ENCODE measurements at regions of chr3 and their contacts with region 1.

Region 1: GRCh38 chr3:66822186-66823008 is 175.7 kb upstream of the KBTBD8 start:
- DNase-seq: peak; percentile 71
- H3K4me3 Mint-ChIP-seq: no peak overlapping the region
- H3K27ac Mint-ChIP-seq: no peak overlapping the region
- H3K4me1 Mint-ChIP-seq: peaks cover 3% of the 10 kb centered on the region
- H3K27me3 Mint-ChIP-seq: peaks cover 2% of the 10 kb centered on the region

Region 2: DNA sequence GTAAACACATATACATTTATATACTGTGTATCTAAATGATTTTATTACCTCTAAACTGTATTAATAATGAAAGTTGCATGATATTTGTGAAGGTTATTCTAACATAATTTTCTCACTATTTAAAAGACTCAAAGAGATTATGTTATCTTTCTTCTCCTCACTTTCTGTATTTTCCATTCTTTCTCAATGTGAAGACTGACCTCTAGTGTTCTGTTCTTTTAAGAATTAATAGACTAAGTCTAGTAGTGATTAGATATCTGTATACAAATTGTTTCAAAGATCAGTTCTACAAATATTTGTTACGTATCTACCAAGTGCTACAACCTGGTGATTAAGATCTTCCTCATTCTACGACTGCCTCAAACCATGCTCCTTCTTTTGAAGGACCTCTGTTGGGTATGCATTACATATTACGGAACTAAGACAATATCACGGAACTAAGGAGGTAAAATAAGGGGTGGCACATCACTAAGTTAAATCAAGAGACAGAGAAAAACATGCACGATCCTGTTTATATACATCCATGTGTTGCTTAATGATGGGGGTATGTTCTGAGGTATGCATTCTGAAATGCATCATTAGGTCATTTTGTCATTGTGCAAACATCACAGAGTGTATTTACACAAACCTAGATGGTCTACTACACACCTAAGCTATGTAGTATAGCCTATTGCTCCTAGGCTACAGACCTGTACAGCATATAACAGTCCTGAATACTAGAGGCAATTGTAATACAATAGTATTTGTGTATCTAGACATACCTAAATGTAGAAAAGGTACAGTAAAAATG is 14.2 kb after region 1 on chr3:
- CTCF ChIA-PET with region 1: interaction called, 10 read pairs
- POLR2A ChIA-PET with region 1: no interaction called
- DNase-seq: no peak
- H3K4me3 Mint-ChIP-seq: no peak overlapping the region
- H3K27ac Mint-ChIP-seq: no peak overlapping the region
- H3K4me1 Mint-ChIP-seq: no peaks in the 10 kb centered on the region
- H3K27me3 Mint-ChIP-seq: peaks cover 2% of the 10 kb centered on the region

Region 3: DNA sequence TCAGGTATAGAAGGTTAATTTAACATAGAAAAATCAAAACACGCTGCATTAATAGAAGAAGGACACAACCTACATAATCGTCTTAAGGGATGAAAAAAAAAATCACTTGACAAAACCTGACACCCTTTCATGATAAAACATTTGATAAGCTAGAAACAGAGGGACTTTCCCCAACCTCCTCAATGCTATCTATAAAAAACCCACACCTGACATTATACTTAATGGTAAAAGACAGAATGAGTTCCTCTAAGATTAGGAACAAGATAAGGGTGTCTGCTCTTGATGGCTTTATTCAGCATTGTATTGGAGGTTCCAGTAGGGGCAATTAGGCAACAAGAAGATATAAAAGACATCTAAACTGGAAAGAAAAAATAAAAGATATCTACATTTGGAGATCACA is 105.9 kb after region 1 on chr3:
- CTCF ChIA-PET with region 1: no interaction called
- POLR2A ChIA-PET with region 1: no interaction called
- DNase-seq: no peak
- H3K4me3 Mint-ChIP-seq: no peak overlapping the region
- H3K27ac Mint-ChIP-seq: no peak overlapping the region
- H3K4me1 Mint-ChIP-seq: no peaks in the 10 kb centered on the region
- H3K27me3 Mint-ChIP-seq: peaks cover 4% of the 10 kb centered on the region

Region 4: GRCh38 chr3:67176396-67176795 is 354.0 kb after region 1 on chr3:
- CTCF ChIA-PET with region 1: no interaction called
- POLR2A ChIA-PET with region 1: no interaction called
- DNase-seq: no peak
- H3K4me3 Mint-ChIP-seq: no peak overlapping the region
- H3K27ac Mint-ChIP-seq: no peak overlapping the region
- H3K4me1 Mint-ChIP-seq: no peaks in the 10 kb centered on the region
- H3K27me3 Mint-ChIP-seq: no peaks in the 10 kb centered on the region